HEK293 (cell line): ENCODE measurements at regions of chr1 and their contacts with region 1.

Region 1: GRCh38 chr1:202112839-202113672 is 9.7 kb upstream of the GPR37L1 start:
- H3K4me3 ChIP-seq: no peak overlapping the region
- H3K27ac ChIP-seq: no peak overlapping the region
- H3K4me1 ChIP-seq: no peaks in the 10 kb centered on the region
- CTCF ChIP-seq: no peak

Region 2: DNA sequence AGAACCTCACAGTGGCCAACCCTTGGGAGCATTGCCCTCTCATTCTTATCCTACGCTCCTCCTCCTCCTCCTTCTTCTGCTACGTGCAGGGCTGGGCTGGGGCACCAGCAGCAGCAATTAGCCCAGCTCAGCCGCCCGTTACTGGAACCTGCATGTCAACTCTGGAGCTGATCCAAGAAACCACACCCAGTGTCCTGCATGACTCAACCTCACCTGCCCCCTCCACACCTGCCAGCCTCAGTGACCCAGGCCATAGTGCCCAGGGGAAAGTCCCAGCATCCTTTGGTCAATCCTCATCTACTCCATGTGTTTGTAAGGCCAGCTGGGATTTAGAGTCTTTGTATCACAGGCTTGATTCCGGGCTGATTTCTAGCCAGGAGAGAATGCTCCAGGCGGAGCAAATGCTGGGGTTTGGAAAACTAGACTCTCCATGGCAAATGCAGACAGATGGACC is 90.0 kb before region 1 on chr1:
- CTCF ChIA-PET with region 1: interaction called, 16 read pairs
- POLR2A ChIA-PET with region 1: no interaction called
- H3K4me3 ChIP-seq: no peak overlapping the region
- H3K27ac ChIP-seq: no peak overlapping the region
- H3K4me1 ChIP-seq: peaks cover 14% of the 10 kb centered on the region
- CTCF ChIP-seq: no peak